ENCODE measurements at regions of chr12 and their contacts with region 1.

Region 1: GRCh38 chr12:26853303-26854030 is 20.5 kb upstream of the ITPR2 start:
- DNase-seq: peak; percentile 86
- ATAC-seq: peak; percentile 97
- H3K4me3 Mint-ChIP-seq: no peak overlapping the region
- H3K27ac Mint-ChIP-seq: no peak overlapping the region
- H3K4me1 Mint-ChIP-seq: no peaks in the 10 kb centered on the region
- H3K27me3 Mint-ChIP-seq: peaks cover 3% of the 10 kb centered on the region
- CTCF ChIP-seq: peak; percentile 75

Region 2: GRCh38 chr12:26798023-26798422 is 55.4 kb before region 1 on chr12:
- CTCF ChIA-PET with region 1: no interaction called
- POLR2A ChIA-PET with region 1: no interaction called
- intact Hi-C with region 1: no loop called
- DNase-seq: no peak
- ATAC-seq: no peak
- H3K4me3 Mint-ChIP-seq: no peak overlapping the region
- H3K27ac Mint-ChIP-seq: no peak overlapping the region
- H3K4me1 Mint-ChIP-seq: peaks cover 13% of the 10 kb centered on the region
- H3K27me3 Mint-ChIP-seq: no peaks in the 10 kb centered on the region
- CTCF ChIP-seq: no peak

Region 3: GRCh38 chr12:26870491-26871419 is 17.3 kb after region 1 on chr12:
- CTCF ChIA-PET with region 1: interaction called, 10 read pairs
- POLR2A ChIA-PET with region 1: no interaction called
- intact Hi-C with region 1: no loop called
- DNase-seq: no peak
- ATAC-seq: no peak
- H3K4me3 Mint-ChIP-seq: no peak overlapping the region
- H3K27ac Mint-ChIP-seq: no peak overlapping the region
- H3K4me1 Mint-ChIP-seq: peaks cover 25% of the 10 kb centered on the region
- H3K27me3 Mint-ChIP-seq: peaks cover 4% of the 10 kb centered on the region
- CTCF ChIP-seq: no peak

Region 4: GRCh38 chr12:26918309-26919215 is 65.1 kb after region 1 on chr12:
- CTCF ChIA-PET with region 1: no interaction called
- POLR2A ChIA-PET with region 1: no interaction called
- intact Hi-C with region 1: no loop called
- DNase-seq: no peak
- ATAC-seq: no peak
- H3K4me3 Mint-ChIP-seq: no peak overlapping the region
- H3K27ac Mint-ChIP-seq: no peak overlapping the region
- H3K4me1 Mint-ChIP-seq: peaks cover 6% of the 10 kb centered on the region
- H3K27me3 Mint-ChIP-seq: no peaks in the 10 kb centered on the region
- CTCF ChIP-seq: no peak

Measured in activated CD8-positive, alpha-beta T cell treated with anti-CD3 and anti-CD28 coated beads for 36 hours (primary cell).